SK-N-SH (cell line): ENCODE measurements at regions of chr16 and their contacts with region 1.

Region 1: GRCh38 chr16:70653809-70654771 is 7.7 kb downstream of the IL34 start:
- DNase-seq: peak; percentile 83
- H3K4me3 ChIP-seq: peak overlapping the region; percentile 14 to 27; a peak in 3 of 4 replicates
- H3K27ac ChIP-seq: peak overlapping the region; percentile 22 to 53
- H3K4me1 ChIP-seq: peaks cover 0 to 7% of the 10 kb centered on the region in 2 experiments; a peak in 1 of 4 replicates
- H3K27me3 ChIP-seq: no peaks in the 10 kb centered on the region
- CTCF ChIP-seq: peak; percentile 94
- EP300 ChIP-seq: peak in 1 of 2 experiments; percentile 81; a peak in 2 of 4 replicates
- RAD21 ChIP-seq: peak; percentile 99

Region 2: DNA sequence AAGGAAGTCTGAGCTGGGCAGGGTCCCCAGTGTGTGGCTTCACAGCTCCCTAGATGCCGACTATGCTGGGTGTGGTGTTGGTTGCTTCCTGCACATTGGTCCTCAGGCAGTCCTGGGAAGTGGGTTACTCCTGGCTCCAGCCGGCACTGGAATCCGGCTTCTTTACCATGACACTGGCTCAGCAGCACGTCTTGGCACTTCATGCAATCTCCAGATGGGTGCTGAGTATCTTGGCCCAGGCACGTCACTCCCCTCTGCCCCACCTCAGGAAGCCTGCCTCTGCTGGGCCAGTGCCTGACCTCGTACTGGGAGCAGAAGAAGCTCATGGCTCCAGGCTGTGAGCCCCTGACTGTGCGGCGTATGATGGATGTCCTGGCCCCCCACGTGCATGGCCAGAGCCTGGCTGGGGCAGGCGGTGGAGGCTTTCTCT is 175.2 kb before region 1 on chr16:
- CTCF ChIA-PET with region 1: no interaction called
- POLR2A ChIA-PET with region 1: no interaction called
- DNase-seq: no peak
- H3K4me3 ChIP-seq: no peak overlapping the region
- H3K27ac ChIP-seq: no peak overlapping the region
- H3K4me1 ChIP-seq: peaks cover 11 to 15% of the 10 kb centered on the region in 2 experiments; a peak in 3 of 4 replicates
- H3K27me3 ChIP-seq: no peaks in the 10 kb centered on the region
- CTCF ChIP-seq: no peak
- EP300 ChIP-seq: no peak
- RAD21 ChIP-seq: no peak

Region 3: GRCh38 chr16:70529051-70529777 is 124.9 kb before region 1 on chr16:
- CTCF ChIA-PET with region 1: interaction called, 12 read pairs
- POLR2A ChIA-PET with region 1: interaction called, 3 read pairs
- DNase-seq: peak; percentile 46
- H3K4me3 ChIP-seq: peak overlapping the region in 1 of 2 experiments; percentile 23; a peak in 1 of 4 replicates
- H3K27ac ChIP-seq: peak overlapping the region in 1 of 2 experiments; percentile 81; a peak in 3 of 4 replicates
- H3K4me1 ChIP-seq: peaks cover 10 to 26% of the 10 kb centered on the region in 2 experiments
- H3K27me3 ChIP-seq: no peaks in the 10 kb centered on the region
- CTCF ChIP-seq: peak; percentile 82
- EP300 ChIP-seq: no peak
- RAD21 ChIP-seq: peak; percentile 50

Region 4: GRCh38 chr16:70573451-70574121 is 80.5 kb before region 1 on chr16:
- CTCF ChIA-PET with region 1: interaction called, 11 read pairs
- POLR2A ChIA-PET with region 1: no interaction called
- DNase-seq: no peak
- H3K4me3 ChIP-seq: no peak overlapping the region
- H3K27ac ChIP-seq: peak overlapping the region; percentile 36 to 71
- H3K4me1 ChIP-seq: peaks cover 0 to 34% of the 10 kb centered on the region in 2 experiments; a peak in 3 of 4 replicates
- H3K27me3 ChIP-seq: no peaks in the 10 kb centered on the region
- CTCF ChIP-seq: no peak
- EP300 ChIP-seq: no peak
- RAD21 ChIP-seq: no peak

Region 5: DNA sequence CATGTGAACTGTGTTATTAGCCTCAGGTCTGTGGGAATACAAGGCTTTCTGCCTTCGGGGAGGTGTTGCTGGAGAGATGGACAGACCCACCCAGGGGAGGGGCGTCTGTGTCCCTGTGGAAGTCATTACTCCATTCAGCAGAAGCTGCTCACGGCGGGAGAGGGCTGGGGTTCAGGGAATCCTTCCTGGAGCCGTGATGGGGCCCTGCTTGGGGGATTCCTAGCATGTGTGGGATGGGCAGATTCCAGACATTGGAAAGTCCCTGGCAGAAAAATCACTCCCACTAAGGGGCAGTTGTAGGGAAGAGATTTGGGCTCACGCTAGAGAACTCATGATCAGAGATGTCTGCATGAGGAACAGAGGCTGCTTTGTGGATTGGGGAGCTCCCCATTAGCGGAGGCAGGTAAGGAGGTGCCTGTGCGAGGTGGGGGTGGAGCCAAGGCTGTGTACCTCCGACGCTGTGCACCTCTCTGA is 64.1 kb before region 1 on chr16:
- CTCF ChIA-PET with region 1: no interaction called
- POLR2A ChIA-PET with region 1: no interaction called
- DNase-seq: peak; percentile 22
- H3K4me3 ChIP-seq: no peak overlapping the region
- H3K27ac ChIP-seq: no peak overlapping the region
- H3K4me1 ChIP-seq: no peaks in the 10 kb centered on the region
- H3K27me3 ChIP-seq: no peaks in the 10 kb centered on the region
- CTCF ChIP-seq: no peak
- EP300 ChIP-seq: no peak
- RAD21 ChIP-seq: no peak

Region 6: DNA sequence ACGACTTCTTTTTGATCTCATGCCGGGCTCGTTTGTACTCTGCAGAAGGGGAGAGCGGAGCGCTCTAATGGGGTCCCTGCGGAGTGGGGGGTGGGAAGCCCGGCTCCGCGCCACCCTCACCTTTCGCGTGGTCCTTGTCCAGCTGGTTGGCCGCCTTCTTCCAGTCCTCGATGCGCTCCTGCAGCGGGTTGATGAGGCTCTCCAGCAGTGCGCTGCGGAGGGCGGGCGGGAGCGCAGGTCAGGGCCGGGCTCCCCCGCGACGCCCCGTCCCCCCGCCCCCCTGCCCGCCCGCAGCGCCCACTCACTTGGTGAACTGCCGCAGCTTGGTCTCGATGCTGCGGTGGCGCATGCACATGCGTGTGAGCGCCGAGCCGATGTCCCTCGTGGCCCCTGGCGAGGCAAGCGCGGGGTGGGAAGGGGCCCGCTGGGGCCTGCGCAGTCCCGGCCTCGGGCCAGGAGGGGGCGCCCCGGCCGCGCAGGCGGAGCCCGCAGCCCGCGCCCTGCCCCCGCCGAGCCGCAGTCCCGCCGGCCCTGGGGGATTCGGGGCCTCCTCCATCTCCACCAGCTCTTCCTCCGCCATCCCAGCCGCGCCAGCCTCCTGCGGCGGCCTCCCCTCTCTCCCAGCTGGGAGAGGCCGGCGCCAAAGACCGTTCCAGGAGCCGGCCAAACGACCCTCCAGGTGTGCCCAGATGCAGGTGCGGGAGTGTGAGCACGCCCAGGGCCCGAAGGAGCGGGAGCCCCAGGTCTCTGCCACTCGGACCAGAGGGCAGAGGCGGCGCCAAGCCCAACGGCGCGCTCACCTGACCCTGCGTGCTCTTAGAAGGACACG is 25.8 kb after region 1 on chr16:
- CTCF ChIA-PET with region 1: interaction called, 11 read pairs
- POLR2A ChIA-PET with region 1: interaction called, 3 read pairs
- DNase-seq: peak; percentile 94
- H3K4me3 ChIP-seq: no peak overlapping the region
- H3K27ac ChIP-seq: no peak overlapping the region; a peak in 1 of 4 replicates
- H3K4me1 ChIP-seq: peaks cover 0 to 39% of the 10 kb centered on the region in 2 experiments; a peak in 1 of 4 replicates
- H3K27me3 ChIP-seq: no peaks in the 10 kb centered on the region
- CTCF ChIP-seq: peak; percentile 36
- EP300 ChIP-seq: no peak
- RAD21 ChIP-seq: peak; percentile 47

Region 7: GRCh38 chr16:70685938-70686375 is 31.9 kb after region 1 on chr16 and contains the start of gene MTSS2:
- CTCF ChIA-PET with region 1: interaction called, 24 read pairs
- POLR2A ChIA-PET with region 1: no interaction called
- DNase-seq: peak; percentile 97
- H3K4me3 ChIP-seq: peak within 1 kb of the TSS; percentile 76 to 97
- H3K27ac ChIP-seq: peak within 1 kb of the TSS; percentile 67 to 81
- H3K4me1 ChIP-seq: peaks cover 24 to 88% of the 10 kb centered on the region in 2 experiments
- H3K27me3 ChIP-seq: no peaks in the 10 kb centered on the region
- CTCF ChIP-seq: no peak
- EP300 ChIP-seq: peak in 1 of 2 experiments; percentile 49; a peak in 1 of 4 replicates
- RAD21 ChIP-seq: no peak
- polyA plus RNA-seq, gene MTSS2: 41.3 and 54.1 TPM in 2 replicates

Region 8: GRCh38 chr16:70703041-70703834 is 49.1 kb after region 1 on chr16:
- CTCF ChIA-PET with region 1: interaction called, 13 read pairs
- POLR2A ChIA-PET with region 1: no interaction called
- DNase-seq: peak; percentile 88
- H3K4me3 ChIP-seq: no peak overlapping the region
- H3K27ac ChIP-seq: peak overlapping the region; percentile 96
- H3K4me1 ChIP-seq: peaks cover 54 to 73% of the 10 kb centered on the region in 2 experiments; a peak in 3 of 4 replicates
- H3K27me3 ChIP-seq: no peaks in the 10 kb centered on the region
- CTCF ChIP-seq: peak; percentile 57
- EP300 ChIP-seq: peak in 1 of 2 experiments; percentile 44; a peak in 1 of 4 replicates
- RAD21 ChIP-seq: peak; percentile 50